Right ventricle myocardium inferior (tissue), 1 donor: ENCODE measurements at regions of chr21 and their contacts with region 1.

Region 1: GRCh38 chr21:33127154-33127893 is 57.4 kb downstream of the OLIG1 start:
- DNase-seq: no peak
- ATAC-seq: peak; percentile 88

Region 2: GRCh38 chr21:32940079-32941014 is 187.0 kb before region 1 on chr21:
- intact Hi-C with region 1: loop called (anchors 5 kb)
- DNase-seq: peak; percentile 69
- ATAC-seq: no peak

Region 3: GRCh38 chr21:32994305-32994704 is 133.0 kb before region 1 on chr21:
- intact Hi-C with region 1: loop called (anchors 5 kb)
- DNase-seq: no peak
- ATAC-seq: no peak

Region 4: GRCh38 chr21:33089398-33090119 is 37.8 kb before region 1 on chr21:
- intact Hi-C with region 1: no loop called
- DNase-seq: peak; percentile 65
- ATAC-seq: no peak